GM10248 (cell line): ENCODE measurements at regions of chr15 and their contacts with region 1.

Region 1: GRCh38 chr15:99275525-99276128 is 24.3 kb downstream of the LRRC28 start:
- DNase-seq: no peak
- CTCF ChIP-seq: no peak

Region 2: DNA sequence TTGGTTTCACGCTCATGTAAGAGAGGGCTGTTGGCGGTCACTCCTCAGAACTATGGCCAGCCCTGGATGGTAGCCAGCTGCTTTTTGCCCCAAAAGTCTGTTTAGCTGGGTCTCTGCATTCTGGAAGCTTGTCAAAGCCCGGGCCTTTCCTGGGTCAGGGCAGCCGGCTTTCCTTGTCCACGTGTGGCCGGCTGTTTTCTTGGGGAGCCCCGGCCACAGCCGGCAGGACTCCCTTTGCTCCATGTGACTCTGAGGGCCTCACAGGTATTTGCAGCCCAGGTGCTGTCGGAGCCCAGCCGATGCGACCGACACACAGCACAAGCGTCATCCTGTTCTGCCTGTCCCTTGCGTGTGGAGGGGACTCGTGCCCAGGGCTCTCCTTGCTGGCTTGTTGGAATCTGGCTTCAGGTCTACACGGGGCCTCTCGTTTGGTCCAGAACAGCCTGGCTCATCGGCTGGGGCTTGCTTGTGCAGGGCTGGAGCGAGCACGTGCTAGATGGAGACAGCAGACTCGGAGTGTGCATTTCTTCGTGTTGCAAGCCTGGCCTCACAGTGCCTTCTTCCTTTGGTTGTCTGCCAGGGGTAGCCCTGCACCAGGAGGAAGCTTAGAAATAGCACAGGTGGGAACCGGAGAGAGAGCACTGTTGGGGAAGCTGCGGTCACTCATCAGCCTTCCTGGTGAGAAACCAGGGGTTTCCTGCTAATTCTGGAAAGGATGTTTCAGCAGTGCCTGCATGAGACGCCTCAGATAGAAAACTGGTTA is 319.5 kb before region 1 on chr15:
- CTCF ChIA-PET with region 1: no interaction called
- POLR2A ChIA-PET with region 1: no interaction called
- DNase-seq: no peak
- CTCF ChIP-seq: no peak

Region 3: DNA sequence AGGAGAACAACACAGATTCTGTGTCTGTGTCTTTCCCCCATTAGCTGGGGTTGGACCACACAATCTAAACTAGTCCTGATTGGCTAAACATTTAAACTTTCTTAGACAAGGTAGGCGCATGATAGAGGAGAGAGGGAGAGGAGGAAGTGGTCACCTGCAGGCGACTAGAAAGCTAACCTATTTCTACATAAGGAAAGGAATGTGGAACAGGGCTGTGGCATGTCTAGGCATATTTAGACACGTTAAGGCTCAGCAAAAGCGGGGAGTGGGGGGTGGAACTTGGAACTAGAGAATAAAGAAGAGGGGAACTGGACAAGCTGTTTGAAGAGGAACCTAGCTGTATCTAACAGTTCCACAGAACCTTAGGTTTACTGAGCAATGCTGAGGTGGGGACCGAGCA is 11.5 kb before region 1 on chr15:
- CTCF ChIA-PET with region 1: interaction called, 62 read pairs
- POLR2A ChIA-PET with region 1: no interaction called
- DNase-seq: no peak
- CTCF ChIP-seq: no peak

Region 4: GRCh38 chr15:99733268-99734039 is 457.8 kb after region 1 on chr15 and contains the start of gene LYSMD4:
- CTCF ChIA-PET with region 1: interaction called, 42 read pairs
- POLR2A ChIA-PET with region 1: no interaction called
- DNase-seq: peak; percentile 100
- CTCF ChIP-seq: no peak

Region 5: DNA sequence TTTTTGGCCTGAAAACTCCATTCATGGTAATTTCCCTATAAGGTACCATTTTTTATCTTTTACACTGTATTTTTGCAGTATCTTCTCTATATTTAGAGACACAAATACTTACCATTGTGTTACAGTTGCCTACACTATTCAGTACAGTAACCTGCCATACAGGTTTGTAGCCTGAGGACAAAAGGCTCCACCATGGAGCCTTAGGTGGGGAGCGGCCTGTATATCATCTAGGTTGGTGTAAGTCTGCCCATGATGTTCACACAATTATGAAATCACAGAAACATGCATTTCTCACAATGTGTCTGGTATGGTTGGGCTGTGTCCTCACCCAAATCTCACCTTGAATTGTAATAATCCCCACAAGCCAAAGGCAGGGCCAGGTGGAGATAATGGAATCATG is 501.5 kb after region 1 on chr15:
- CTCF ChIA-PET with region 1: interaction called, 12 read pairs
- POLR2A ChIA-PET with region 1: no interaction called
- DNase-seq: no peak
- CTCF ChIP-seq: no peak